Activated naive CD4-positive, alpha-beta T cell treated with anti-CD3 and anti-CD28 coated beads for 36 hours (primary cell): ENCODE measurements at regions of chr3 and their contacts with region 1.

Region 1: DNA sequence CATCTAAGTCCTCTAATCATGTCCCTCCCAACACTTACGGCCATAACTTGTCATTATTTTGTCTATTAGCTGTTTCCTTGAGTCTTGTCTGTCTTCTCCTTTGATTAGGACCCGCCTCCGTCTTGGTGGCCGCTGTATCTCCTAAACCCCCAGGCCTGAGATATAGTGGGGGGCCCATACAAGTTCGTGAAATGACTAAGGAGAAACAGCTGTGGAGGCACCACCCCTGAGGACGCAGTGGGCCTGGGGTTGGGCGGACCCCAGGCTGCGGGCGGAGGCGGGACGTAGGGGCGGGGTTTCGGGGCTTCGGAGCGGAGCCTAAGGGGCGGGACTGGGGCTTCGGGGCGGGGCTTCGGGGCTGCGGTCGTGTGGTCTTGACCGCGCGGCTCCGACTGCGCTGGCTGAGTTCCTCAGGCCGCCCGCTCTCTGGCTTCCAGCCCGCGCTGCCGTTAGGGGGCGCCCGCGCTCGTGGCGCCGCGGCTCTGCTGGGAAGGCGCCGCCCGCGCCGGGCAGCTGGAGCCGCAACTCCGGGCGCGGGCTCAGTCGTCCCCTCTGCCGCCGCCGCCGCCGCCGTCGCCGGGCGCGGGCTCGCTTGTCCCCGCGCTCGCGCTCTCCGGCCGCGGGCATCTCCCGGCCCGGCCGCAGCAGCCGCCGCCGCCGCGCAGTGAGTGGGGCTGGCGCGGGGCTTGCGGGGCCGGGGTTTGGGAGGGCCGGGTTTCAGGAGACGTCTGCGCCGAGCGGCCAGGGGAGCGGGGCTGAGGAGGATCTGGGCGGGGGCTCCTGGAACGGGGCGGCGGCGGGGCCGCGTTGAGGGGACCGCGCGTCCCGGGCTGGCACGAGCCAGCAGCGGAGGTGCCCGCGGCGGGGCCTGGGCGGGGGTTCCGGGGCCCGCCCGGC is at the start of gene KCTD6:
- DNase-seq: peak; percentile 83
- H3K4me3 Mint-ChIP-seq: peak within 1 kb of the TSS; percentile 88
- H3K27ac Mint-ChIP-seq: peak within 1 kb of the TSS; percentile 80
- H3K4me1 Mint-ChIP-seq: peaks cover 47% of the 10 kb centered on the region
- H3K27me3 Mint-ChIP-seq: no peaks in the 10 kb centered on the region
- total RNA-seq, gene KCTD6: 8.4 to 9.9 TPM

Region 2: GRCh38 chr3:58237238-58237940 is 254.4 kb before region 1 on chr3 and contains the start of gene ABHD6:
- CTCF ChIA-PET with region 1: no interaction called
- intact Hi-C with region 1: loop called (anchors 5 kb)
- DNase-seq: peak; percentile 75
- H3K4me3 Mint-ChIP-seq: peak within 1 kb of the TSS; percentile 86
- H3K27ac Mint-ChIP-seq: peak within 1 kb of the TSS; percentile 46
- H3K4me1 Mint-ChIP-seq: peaks cover 10% of the 10 kb centered on the region
- H3K27me3 Mint-ChIP-seq: peaks cover 6% of the 10 kb centered on the region
- total RNA-seq, gene ABHD6: 1.1 to 1.6 TPM

Region 3: DNA sequence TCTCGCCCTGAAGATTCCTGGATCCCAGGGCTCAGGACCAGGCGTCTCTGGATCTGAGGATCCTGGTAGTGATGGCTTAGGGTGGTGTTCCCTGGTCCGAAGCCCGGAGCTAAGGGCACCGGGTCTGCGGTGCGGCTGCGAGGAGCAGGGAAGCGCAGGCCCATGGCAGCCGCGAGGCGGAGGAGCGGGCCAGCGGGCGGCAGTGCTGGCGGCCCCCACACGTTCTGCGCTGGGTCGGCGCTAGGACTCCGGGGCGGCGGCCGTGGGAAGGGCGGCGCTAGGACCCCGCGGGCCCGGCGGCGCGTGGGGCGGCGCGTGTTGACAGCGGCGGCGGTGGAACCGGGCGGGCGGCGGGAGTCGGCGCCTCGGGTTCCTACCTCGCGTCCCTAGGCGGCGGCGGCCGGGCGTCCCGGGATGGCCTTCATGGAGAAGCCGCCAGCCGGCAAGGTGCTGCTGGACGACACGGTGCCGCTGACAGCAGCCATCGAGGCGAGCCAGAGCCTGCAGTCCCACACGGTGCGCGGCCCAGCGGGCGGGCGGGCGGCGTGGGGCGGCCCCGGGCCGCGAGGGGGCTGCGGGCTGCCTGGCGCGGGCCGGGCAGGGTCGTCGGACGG is 159.1 kb before region 1 on chr3 and contains the start of gene PXK:
- CTCF ChIA-PET with region 1: interaction called, 4 read pairs
- intact Hi-C with region 1: loop called (anchors 1 kb)
- DNase-seq: peak; percentile 77
- H3K4me3 Mint-ChIP-seq: peak within 1 kb of the TSS; percentile 100
- H3K27ac Mint-ChIP-seq: peak within 1 kb of the TSS; percentile 91
- H3K4me1 Mint-ChIP-seq: peaks cover 28% of the 10 kb centered on the region
- H3K27me3 Mint-ChIP-seq: no peaks in the 10 kb centered on the region
- total RNA-seq, gene PXK: 44.7 to 46.1 TPM

Region 4: DNA sequence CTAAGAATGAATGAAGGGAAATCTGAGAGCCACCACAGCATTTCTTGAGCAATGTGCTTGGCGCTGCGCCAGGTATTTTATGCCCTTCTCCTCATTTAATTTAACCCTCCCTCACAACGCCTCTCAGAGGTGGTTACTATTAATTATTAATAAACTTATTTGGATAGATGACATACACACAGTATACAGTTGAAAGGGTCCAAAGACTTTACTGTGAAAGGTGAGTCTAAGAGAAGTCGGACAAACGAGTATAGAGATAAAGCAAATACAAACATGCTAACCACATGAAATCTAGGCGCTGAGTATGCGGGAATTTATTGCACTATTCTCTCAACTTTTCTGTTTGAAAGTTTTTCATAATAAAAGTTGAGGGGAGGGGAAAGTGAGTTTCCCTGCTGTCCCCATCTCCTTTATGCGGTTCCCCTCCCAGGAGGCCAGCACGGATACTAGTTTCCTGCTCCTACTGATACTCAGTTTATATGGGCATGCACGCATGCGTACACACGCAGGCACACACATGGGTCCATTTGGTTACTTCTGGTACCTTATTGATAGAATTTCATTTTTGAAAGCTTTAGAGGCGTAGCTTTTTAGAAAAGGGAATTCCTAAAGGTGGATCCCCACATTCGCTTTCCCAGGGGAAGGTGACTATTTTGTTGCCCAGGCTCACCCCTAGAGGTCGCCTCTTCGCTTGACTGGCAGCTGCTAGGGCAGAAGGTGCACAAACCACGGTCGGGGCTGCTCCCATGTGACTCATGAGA is 28.4 kb before region 1 on chr3:
- CTCF ChIA-PET with region 1: interaction called, 7 read pairs
- intact Hi-C with region 1: loop called (anchors 1 kb)
- DNase-seq: peak; percentile 92
- H3K4me3 Mint-ChIP-seq: peak overlapping the region; percentile 16
- H3K27ac Mint-ChIP-seq: peak overlapping the region; percentile 61
- H3K4me1 Mint-ChIP-seq: peaks cover 15% of the 10 kb centered on the region
- H3K27me3 Mint-ChIP-seq: peaks cover 3% of the 10 kb centered on the region

Region 5: DNA sequence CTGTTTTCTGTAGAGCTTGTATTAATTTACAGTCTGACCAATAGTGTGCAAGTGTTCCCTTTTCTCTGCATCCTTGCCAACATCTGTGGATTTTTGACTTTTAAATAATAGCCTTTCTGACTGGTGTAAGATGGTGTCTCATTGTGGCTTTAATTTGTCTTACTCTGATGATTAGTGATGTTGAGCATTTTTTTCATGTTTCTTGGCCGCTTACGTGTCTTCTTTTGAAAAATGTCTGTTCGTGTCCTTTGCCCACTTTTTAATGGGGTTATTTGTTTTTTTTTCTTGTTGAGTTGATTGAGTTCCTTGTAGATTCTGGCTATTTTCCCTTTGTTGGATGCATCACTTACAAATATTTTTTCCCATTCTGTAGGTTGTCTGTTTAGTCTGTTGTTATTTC is 52.8 kb after region 1 on chr3:
- CTCF ChIA-PET with region 1: no interaction called
- intact Hi-C with region 1: no loop called
- DNase-seq: no peak
- H3K4me3 Mint-ChIP-seq: no peak overlapping the region
- H3K27ac Mint-ChIP-seq: no peak overlapping the region
- H3K4me1 Mint-ChIP-seq: no peaks in the 10 kb centered on the region
- H3K27me3 Mint-ChIP-seq: no peaks in the 10 kb centered on the region

Region 6: GRCh38 chr3:58585005-58585786 is 93.4 kb after region 1 on chr3:
- CTCF ChIA-PET with region 1: no interaction called
- intact Hi-C with region 1: loop called (anchors 5 kb)
- DNase-seq: peak; percentile 79
- H3K4me3 Mint-ChIP-seq: peak overlapping the region; percentile 82
- H3K27ac Mint-ChIP-seq: no peak overlapping the region
- H3K4me1 Mint-ChIP-seq: peaks cover 17% of the 10 kb centered on the region
- H3K27me3 Mint-ChIP-seq: peaks cover 35% of the 10 kb centered on the region